ENCODE measurements at regions of chr16 and their contacts with region 1.

Region 1: DNA sequence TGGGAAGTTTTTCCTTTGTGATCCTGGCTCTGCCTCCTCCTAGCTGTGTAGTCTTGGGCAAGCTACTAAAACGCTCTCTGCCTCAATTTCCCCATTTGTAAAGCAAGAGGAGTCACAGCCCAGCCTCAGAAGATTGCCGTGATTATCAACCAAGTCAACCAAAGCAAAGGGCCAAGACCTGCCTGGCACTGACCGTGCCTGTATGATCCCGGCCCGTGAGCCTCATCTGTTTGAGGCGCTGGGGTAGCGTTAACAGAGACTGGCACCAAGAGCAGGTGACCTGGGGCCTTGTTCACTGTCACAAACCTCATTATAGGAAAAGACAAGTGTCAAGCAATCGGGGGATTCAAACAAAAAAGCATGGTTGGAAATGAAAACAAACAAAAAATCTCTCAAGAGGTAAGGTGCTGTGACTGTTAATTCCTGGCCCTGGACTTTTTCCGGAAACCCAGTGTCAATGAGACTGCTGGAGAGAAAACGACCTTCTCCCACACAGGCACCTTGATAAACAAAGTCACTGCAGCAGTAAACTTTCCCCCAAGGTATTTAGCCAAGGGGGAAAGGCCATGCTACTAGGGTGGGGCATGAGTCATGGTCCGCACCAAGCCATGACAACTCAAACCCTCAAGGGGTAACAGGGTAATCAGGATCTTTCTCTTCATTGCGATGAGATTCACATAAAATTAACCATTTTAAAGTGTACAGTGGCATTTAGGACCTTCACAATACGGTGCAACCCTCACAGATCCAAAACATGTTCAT is 5.4 kb downstream of the MEAK7 start:
- DNase-seq: no peak
- H3K4me3 Mint-ChIP-seq: no peak overlapping the region
- H3K27ac Mint-ChIP-seq: no peak overlapping the region
- H3K4me1 Mint-ChIP-seq: peaks cover 42% of the 10 kb centered on the region
- H3K27me3 Mint-ChIP-seq: no peaks in the 10 kb centered on the region
- CTCF ChIP-seq: no peak

Region 2: DNA sequence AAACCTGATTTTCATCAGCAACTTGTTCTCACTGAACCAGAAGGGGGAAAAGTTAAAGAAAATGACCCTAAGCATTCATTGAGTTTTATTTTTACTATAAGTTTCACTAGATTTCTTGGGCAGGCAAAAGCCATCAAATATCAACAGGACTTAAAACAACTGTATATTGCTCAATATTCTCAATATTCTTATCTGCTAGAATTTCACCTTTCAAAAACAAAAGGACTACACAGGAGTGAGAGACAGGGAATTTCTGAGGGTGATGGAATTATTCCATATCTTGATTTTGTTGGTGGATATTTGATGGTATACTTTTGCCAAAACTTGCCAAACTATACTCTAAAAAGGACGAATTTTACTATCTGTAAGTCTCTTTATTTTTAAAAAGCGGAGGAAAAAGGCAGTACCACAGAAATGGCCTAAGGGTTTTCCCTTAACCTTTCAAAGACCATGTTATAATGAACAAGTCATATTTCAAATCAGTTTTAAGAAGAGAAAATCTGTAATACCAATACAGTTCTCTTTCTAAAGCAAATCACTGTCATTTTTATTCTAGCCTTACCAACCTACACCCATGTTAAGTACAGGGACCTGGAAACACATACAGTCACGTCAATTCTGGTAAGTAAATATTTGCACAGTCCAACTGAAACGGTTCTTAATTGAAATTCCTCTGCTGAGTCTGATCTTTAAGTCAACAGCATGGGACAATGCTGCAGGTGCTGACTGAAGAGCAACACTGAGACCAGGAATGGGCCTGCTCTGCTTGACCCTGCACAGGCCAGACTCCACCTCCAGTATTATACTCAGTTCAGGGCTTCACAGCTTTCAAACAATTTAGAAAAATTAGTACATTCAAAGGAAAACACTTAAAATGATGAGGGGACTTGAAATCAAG is 402.7 kb before region 1 on chr16:
- CTCF ChIA-PET with region 1: no interaction called
- intact Hi-C with region 1: loop called (anchors 10 kb)
- DNase-seq: no peak
- H3K4me3 Mint-ChIP-seq: no peak overlapping the region
- H3K27ac Mint-ChIP-seq: no peak overlapping the region
- H3K4me1 Mint-ChIP-seq: peaks cover 9% of the 10 kb centered on the region
- H3K27me3 Mint-ChIP-seq: no peaks in the 10 kb centered on the region
- CTCF ChIP-seq: no peak